Activated CD4-positive, alpha-beta memory T cell treated with anti-CD3 and anti-CD28 coated beads for 36 hours (primary cell): ENCODE measurements at regions of chr3 and their contacts with region 1.

Region 1: GRCh38 chr3:57692259-57693147 is at the start of gene DENND6A:
- DNase-seq: peak; percentile 97
- H3K4me3 Mint-ChIP-seq: peak within 1 kb of the TSS; percentile 81
- H3K27ac Mint-ChIP-seq: peak within 1 kb of the TSS; percentile 92
- H3K4me1 Mint-ChIP-seq: peaks cover 36% of the 10 kb centered on the region
- H3K27me3 Mint-ChIP-seq: no peaks in the 10 kb centered on the region
- total RNA-seq, gene DENND6A: 13.0 to 16.0 TPM

Region 2: DNA sequence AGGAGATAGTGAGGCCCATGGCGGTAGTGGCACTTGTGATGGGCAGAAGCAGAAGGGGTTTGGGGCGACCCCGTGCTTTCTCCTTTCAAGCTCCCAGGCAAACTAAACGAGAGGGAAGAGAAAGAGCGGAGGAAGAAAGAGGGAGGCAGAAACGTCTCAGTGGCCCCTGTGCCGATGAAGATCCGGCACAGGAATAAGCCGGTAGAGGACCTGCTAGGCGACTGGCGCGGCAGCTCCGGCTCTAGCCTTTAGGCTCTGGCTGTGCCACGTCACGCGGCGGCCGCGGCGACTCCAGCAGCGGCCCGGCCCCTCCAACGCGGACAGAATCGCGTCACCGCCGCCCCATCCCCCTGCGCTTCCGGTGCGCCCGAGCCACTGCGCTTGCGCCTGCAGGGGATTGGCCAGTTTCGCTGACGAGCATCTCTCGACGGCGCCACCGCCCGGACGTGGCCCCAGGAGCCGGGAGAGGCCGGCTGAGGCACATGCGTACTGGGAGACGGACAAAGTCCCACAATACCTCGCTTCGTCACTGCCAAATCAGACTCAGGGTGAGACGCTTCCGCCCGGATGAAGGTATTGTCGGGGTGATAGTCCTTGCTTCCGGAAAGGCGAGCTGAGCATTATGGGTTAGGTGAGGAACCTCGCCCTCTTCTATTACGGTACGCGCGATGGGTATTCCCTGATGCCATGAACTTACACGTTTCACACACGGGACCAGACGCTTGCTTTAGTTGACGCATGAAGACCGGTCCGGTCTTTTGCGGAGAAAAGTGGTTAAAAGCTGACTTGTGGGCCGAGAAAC is 95.2 kb before region 1 on chr3 and contains the start of gene ARF4:
- CTCF ChIA-PET with region 1: no interaction called
- POLR2A ChIA-PET with region 1: interaction called, 3 read pairs
- intact Hi-C with region 1: loop called (anchors 1 kb)
- DNase-seq: peak; percentile 100
- H3K4me3 Mint-ChIP-seq: peak within 1 kb of the TSS; percentile 97
- H3K27ac Mint-ChIP-seq: peak within 1 kb of the TSS; percentile 99
- H3K4me1 Mint-ChIP-seq: peaks cover 41% of the 10 kb centered on the region
- H3K27me3 Mint-ChIP-seq: no peaks in the 10 kb centered on the region
- total RNA-seq, gene ARF4: 66.6 to 68.8 TPM

Region 3: GRCh38 chr3:57815036-57815435 is 122.5 kb after region 1 on chr3:
- CTCF ChIA-PET with region 1: no interaction called
- POLR2A ChIA-PET with region 1: no interaction called
- intact Hi-C with region 1: loop called (anchors 5 kb)
- DNase-seq: peak; percentile 50
- H3K4me3 Mint-ChIP-seq: no peak overlapping the region
- H3K27ac Mint-ChIP-seq: no peak overlapping the region
- H3K4me1 Mint-ChIP-seq: peaks cover 38% of the 10 kb centered on the region
- H3K27me3 Mint-ChIP-seq: no peaks in the 10 kb centered on the region